Dendritic cell treated with granulocyte-macrophage colony-stimulating factor and Interleukin-4, amounts not matched to agents 40 ng/mL and 50 ng/mL, for 4 days (primary cell): ENCODE measurements at regions of chr20 and their contacts with region 1.

Region 1: GRCh38 chr20:48787861-48788375 is 39.9 kb downstream of the PREX1 start:
- H3K4me3 Mint-ChIP-seq: peak overlapping the region; percentile 57
- H3K27ac Mint-ChIP-seq: peak overlapping the region; percentile 83
- H3K4me1 Mint-ChIP-seq: peaks cover 82% of the 10 kb centered on the region
- H3K27me3 Mint-ChIP-seq: no peaks in the 10 kb centered on the region

Region 2: DNA sequence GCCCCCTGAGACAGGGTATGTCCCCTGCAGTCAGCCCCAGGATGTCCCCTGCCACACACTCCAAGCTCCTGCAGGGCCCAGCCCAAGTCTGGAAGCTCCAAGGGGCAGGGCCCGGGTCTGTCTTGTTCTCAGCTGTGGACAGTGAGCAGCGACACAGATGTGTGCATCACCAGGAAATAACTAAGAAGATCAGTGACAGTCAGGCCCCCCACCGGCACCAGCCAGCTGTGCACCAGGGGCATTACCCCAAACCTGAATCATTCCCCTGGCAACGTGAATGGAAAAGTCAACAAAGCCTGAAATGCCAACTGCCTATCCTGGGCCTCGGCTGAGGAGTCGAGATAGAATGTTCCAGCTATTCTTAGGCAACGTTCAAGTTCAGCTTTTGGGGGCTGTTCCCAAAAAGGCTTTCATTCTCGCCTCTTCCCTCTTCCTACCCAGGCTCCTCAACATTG is 65.2 kb before region 1 on chr20:
- intact Hi-C with region 1: no loop called
- H3K4me3 Mint-ChIP-seq: peak overlapping the region; percentile 35
- H3K27ac Mint-ChIP-seq: peak overlapping the region; percentile 80
- H3K4me1 Mint-ChIP-seq: peaks cover 98% of the 10 kb centered on the region
- H3K27me3 Mint-ChIP-seq: no peaks in the 10 kb centered on the region

Region 3: DNA sequence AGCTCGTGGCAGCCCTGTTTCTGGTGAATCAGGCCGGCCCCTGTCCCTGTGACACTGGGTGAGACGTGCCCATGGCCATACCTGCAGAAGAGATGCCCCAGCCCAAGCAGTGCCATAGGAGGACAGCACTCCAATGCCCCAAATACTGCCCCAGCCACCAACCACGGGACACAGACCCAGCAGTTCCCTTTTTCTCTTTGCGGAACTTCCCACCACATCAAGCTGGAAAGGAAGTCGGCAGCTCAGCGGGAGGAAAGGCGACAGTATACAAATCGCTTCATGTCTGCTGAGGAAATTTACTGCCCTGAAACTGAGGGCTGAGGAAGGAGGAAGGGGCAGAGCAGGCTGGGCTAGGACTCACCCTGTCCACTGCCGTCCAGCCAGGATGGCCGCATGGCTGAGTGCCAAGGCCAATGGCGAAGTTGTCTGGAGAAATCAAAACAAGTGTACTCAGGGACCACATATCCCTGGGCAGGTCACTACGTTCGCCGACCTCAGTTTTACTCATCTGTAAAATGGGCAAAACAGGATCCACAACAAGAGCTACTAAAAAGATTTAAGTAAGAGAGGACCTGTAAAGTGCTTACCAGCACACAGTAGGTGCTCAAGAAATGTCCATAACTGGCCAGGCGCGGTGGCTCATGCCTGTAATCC is 15.4 kb before region 1 on chr20:
- intact Hi-C with region 1: loop called (anchors 1 kb)
- H3K4me3 Mint-ChIP-seq: no peak overlapping the region
- H3K27ac Mint-ChIP-seq: peak overlapping the region; percentile 62
- H3K4me1 Mint-ChIP-seq: peaks cover 100% of the 10 kb centered on the region
- H3K27me3 Mint-ChIP-seq: no peaks in the 10 kb centered on the region

Region 4: GRCh38 chr20:48945851-48946514 is 158.1 kb after region 1 on chr20:
- intact Hi-C with region 1: no loop called
- H3K4me3 Mint-ChIP-seq: no peak overlapping the region
- H3K27ac Mint-ChIP-seq: no peak overlapping the region
- H3K4me1 Mint-ChIP-seq: peaks cover 4% of the 10 kb centered on the region
- H3K27me3 Mint-ChIP-seq: no peaks in the 10 kb centered on the region

Region 5: GRCh38 chr20:49424536-49424935 is 636.6 kb after region 1 on chr20:
- intact Hi-C with region 1: no loop called
- H3K4me3 Mint-ChIP-seq: no peak overlapping the region
- H3K27ac Mint-ChIP-seq: no peak overlapping the region
- H3K4me1 Mint-ChIP-seq: no peaks in the 10 kb centered on the region
- H3K27me3 Mint-ChIP-seq: peaks cover 2% of the 10 kb centered on the region